Activated CD4-positive, alpha-beta T cell treated with anti-CD3 and anti-CD28 coated beads for 36 hours (primary cell): ENCODE measurements at regions of chr16 and their contacts with region 1.

Region 1: GRCh38 chr16:50671644-50672260 is 9.4 kb downstream of the SNX20 start:
- DNase-seq: peak; percentile 80
- ATAC-seq: no peak
- H3K4me3 Mint-ChIP-seq: no peak overlapping the region
- H3K27ac Mint-ChIP-seq: peak overlapping the region; percentile 71
- H3K4me1 Mint-ChIP-seq: peaks cover 30% of the 10 kb centered on the region
- H3K27me3 Mint-ChIP-seq: no peaks in the 10 kb centered on the region

Region 2: DNA sequence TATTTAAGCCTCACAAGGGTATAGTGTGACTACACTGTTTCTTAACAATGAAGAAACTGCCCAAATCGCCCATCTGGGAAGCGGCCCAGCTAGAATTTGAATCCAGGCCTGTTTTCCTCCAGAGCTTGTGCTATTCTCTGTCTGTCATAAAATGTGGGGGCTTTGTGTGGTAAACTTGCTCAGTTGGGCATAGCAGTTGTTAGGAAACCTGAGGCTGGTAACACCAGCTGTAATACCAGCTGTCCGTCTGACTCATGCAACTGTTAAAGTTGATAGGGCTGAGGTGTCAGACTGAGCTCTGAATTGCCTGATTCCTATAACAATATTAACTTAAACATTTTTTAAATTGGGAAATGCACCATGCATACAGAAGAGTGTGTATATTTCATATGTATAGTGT is 31.0 kb after region 1 on chr16:
- CTCF ChIA-PET with region 1: interaction called, 11 read pairs
- POLR2A ChIA-PET with region 1: interaction called, 3 read pairs
- intact Hi-C with region 1: loop called in 1 of 2 experiments (anchors 5 kb)
- DNase-seq: no peak
- ATAC-seq: no peak
- H3K4me3 Mint-ChIP-seq: no peak overlapping the region
- H3K27ac Mint-ChIP-seq: no peak overlapping the region
- H3K4me1 Mint-ChIP-seq: peaks cover 63% of the 10 kb centered on the region
- H3K27me3 Mint-ChIP-seq: no peaks in the 10 kb centered on the region

Region 3: DNA sequence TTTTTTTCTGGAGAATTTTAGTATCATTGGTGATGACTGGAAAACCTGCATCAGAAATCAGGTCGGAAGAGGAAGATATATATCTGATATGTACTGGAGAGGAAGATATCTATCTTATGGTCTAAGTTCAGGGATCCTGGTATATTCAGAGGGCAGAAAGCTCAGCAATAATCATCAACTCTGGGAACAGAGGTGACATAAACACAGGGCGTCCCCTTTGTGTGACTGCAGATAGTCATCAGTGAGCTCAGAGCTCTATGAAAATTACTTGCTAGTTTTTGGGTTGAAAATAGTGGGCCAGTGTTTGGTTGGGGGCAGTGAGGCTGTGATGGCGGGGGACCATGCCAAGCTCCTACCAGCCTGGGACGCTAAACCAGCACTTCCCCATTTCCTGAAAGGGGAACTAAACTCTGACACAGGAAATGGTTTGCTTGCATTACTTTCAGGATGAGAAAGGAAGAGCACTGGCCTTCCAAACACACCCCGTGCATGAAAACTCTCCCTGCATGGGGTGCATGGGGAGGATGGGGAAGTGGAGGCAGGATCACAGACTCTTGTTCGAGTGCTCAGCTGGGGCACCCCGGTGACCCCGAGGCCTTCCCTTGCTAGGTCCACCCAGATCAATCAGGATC is 37.4 kb after region 1 on chr16:
- CTCF ChIA-PET with region 1: no interaction called
- POLR2A ChIA-PET with region 1: no interaction called
- intact Hi-C with region 1: loop called in 1 of 2 experiments (anchors 5 kb)
- DNase-seq: no peak
- ATAC-seq: peak; percentile 56
- H3K4me3 Mint-ChIP-seq: peak overlapping the region; percentile 47
- H3K27ac Mint-ChIP-seq: peak overlapping the region; percentile 95
- H3K4me1 Mint-ChIP-seq: peaks cover 51% of the 10 kb centered on the region
- H3K27me3 Mint-ChIP-seq: no peaks in the 10 kb centered on the region

Region 4: DNA sequence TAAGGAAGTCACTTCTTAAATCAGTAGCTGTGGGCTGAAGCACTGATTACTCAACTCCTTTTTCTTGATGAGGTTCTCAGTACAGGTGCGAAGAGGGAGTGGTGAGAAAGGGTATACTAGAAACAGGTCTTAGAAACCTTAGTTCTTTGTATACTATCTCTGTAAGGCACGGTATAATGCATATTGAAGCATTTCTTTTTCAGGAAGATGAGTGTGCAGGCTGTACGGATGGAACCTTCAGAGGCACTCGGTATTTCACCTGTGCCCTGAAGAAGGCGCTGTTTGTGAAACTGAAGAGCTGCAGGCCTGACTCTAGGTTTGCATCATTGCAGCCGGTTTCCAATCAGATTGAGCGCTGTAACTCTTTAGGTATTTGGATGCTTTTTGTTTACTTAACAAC is 109.3 kb after region 1 on chr16:
- CTCF ChIA-PET with region 1: interaction called, 13 read pairs
- POLR2A ChIA-PET with region 1: no interaction called
- intact Hi-C with region 1: no loop called
- DNase-seq: peak; percentile 49
- ATAC-seq: peak; percentile 64
- H3K4me3 Mint-ChIP-seq: no peak overlapping the region
- H3K27ac Mint-ChIP-seq: peak overlapping the region; percentile 77
- H3K4me1 Mint-ChIP-seq: peaks cover 55% of the 10 kb centered on the region
- H3K27me3 Mint-ChIP-seq: no peaks in the 10 kb centered on the region

Region 5: GRCh38 chr16:50830698-50831097 is 158.9 kb after region 1 on chr16:
- CTCF ChIA-PET with region 1: no interaction called
- POLR2A ChIA-PET with region 1: no interaction called
- intact Hi-C with region 1: no loop called
- DNase-seq: no peak
- ATAC-seq: no peak
- H3K4me3 Mint-ChIP-seq: no peak overlapping the region
- H3K27ac Mint-ChIP-seq: no peak overlapping the region
- H3K4me1 Mint-ChIP-seq: no peaks in the 10 kb centered on the region
- H3K27me3 Mint-ChIP-seq: peaks cover 10% of the 10 kb centered on the region

Region 6: GRCh38 chr16:50967827-50968612 is 296.3 kb after region 1 on chr16:
- CTCF ChIA-PET with region 1: no interaction called
- POLR2A ChIA-PET with region 1: no interaction called
- intact Hi-C with region 1: no loop called
- DNase-seq: no peak
- ATAC-seq: no peak
- H3K4me3 Mint-ChIP-seq: no peak overlapping the region
- H3K27ac Mint-ChIP-seq: no peak overlapping the region
- H3K4me1 Mint-ChIP-seq: no peaks in the 10 kb centered on the region
- H3K27me3 Mint-ChIP-seq: peaks cover 7% of the 10 kb centered on the region